ENCODE measurements at regions of chr10 and their contacts with region 1.

Region 1: GRCh38 chr10:60549686-60550085 is 160.0 kb upstream of the ANK3 start:
- DNase-seq: peak; percentile 24
- H3K4me3 ChIP-seq: no peak overlapping the region
- H3K27ac ChIP-seq: no peak overlapping the region
- H3K4me1 ChIP-seq: no peaks in the 10 kb centered on the region
- H3K27me3 ChIP-seq: no peaks in the 10 kb centered on the region
- CTCF ChIP-seq: peak in 1 of 2 donors; percentile 13
- POLR2A ChIP-seq: no peak

Region 2: GRCh38 chr10:60646966-60647796 is 97.5 kb after region 1 on chr10:
- CTCF ChIA-PET with region 1: interaction called, 5 read pairs
- POLR2A ChIA-PET with region 1: no interaction called
- dilution Hi-C with region 1: no loop called
- intact Hi-C with region 1: loop called (anchors 2 kb)
- DNase-seq: peak; percentile 65
- H3K4me3 ChIP-seq: no peak overlapping the region
- H3K27ac ChIP-seq: no peak overlapping the region
- H3K4me1 ChIP-seq: no peaks in the 10 kb centered on the region
- H3K27me3 ChIP-seq: no peaks in the 10 kb centered on the region
- CTCF ChIP-seq: peak; percentile 34 to 43
- POLR2A ChIP-seq: no peak